ENCODE measurements at regions of chr1 and their contacts with region 1.

Region 1: GRCh38 chr1:66242646-66243547 is 291.1 kb upstream of the SGIP1 start:
- DNase-seq: peak; percentile 83
- ATAC-seq: peak; percentile 95
- H3K4me3 Mint-ChIP-seq: no peak overlapping the region
- H3K27ac Mint-ChIP-seq: no peak overlapping the region
- H3K4me1 Mint-ChIP-seq: peaks cover 27% of the 10 kb centered on the region
- H3K27me3 Mint-ChIP-seq: peaks cover 6% of the 10 kb centered on the region

Region 2: DNA sequence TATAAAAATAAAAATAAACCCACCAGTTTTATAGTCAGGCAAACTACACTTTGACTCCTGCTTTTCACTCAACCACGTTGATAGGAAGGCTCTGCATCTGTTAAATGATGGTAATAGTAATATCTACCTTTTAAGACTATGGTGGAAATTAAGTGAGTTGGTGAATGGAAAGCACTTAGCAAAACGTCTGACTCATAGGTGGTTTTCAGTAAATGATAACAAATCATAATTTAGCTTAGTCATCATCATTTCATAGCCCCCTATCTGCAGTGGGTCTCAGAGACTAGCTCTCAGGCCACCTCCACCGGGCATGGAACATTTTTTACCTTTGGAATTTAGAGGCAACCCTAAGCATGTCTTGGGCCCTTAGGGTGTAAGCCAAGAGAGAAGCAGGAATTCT is 290.2 kb before region 1 on chr1:
- CTCF ChIA-PET with region 1: interaction called, 109 read pairs
- POLR2A ChIA-PET with region 1: no interaction called
- DNase-seq: no peak
- ATAC-seq: no peak
- H3K4me3 Mint-ChIP-seq: no peak overlapping the region
- H3K27ac Mint-ChIP-seq: no peak overlapping the region
- H3K4me1 Mint-ChIP-seq: no peaks in the 10 kb centered on the region
- H3K27me3 Mint-ChIP-seq: peaks cover 4% of the 10 kb centered on the region

Region 3: DNA sequence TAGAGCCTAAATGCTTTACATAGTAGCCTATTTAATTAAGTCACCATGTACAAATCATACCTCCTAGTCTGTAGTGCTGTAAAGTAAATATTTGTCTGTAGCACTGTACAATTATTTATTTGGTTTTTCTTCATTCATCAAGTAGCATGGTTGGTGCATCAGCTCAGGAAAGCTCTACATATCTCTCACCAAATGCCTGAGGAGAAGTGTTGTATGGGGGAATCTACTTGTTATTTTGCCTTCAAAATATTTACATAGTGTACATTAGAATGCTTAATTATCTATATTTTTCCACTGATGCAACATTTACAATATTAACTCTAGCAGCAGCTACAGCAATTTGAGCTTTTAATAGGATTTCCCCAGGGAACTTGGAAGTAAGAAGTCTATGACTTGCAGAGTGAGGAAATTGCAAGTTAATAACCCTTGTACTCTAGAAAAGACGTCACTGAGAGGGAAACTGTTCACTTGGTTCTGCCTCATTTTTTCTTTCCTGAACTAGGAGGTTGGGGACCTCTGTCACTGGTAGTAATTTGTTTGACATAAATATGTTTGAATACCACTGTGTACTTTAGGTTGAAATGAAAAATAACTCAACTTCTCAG is 242.8 kb before region 1 on chr1:
- CTCF ChIA-PET with region 1: interaction called, 20 read pairs
- POLR2A ChIA-PET with region 1: no interaction called
- DNase-seq: no peak
- ATAC-seq: no peak
- H3K4me3 Mint-ChIP-seq: no peak overlapping the region
- H3K27ac Mint-ChIP-seq: no peak overlapping the region
- H3K4me1 Mint-ChIP-seq: no peaks in the 10 kb centered on the region
- H3K27me3 Mint-ChIP-seq: peaks cover 6% of the 10 kb centered on the region

Region 4: GRCh38 chr1:66217021-66217420 is 25.9 kb before region 1 on chr1:
- CTCF ChIA-PET with region 1: interaction called, 15 read pairs
- POLR2A ChIA-PET with region 1: no interaction called
- DNase-seq: no peak
- ATAC-seq: no peak
- H3K4me3 Mint-ChIP-seq: no peak overlapping the region
- H3K27ac Mint-ChIP-seq: no peak overlapping the region
- H3K4me1 Mint-ChIP-seq: peaks cover 6% of the 10 kb centered on the region
- H3K27me3 Mint-ChIP-seq: no peaks in the 10 kb centered on the region

Region 5: DNA sequence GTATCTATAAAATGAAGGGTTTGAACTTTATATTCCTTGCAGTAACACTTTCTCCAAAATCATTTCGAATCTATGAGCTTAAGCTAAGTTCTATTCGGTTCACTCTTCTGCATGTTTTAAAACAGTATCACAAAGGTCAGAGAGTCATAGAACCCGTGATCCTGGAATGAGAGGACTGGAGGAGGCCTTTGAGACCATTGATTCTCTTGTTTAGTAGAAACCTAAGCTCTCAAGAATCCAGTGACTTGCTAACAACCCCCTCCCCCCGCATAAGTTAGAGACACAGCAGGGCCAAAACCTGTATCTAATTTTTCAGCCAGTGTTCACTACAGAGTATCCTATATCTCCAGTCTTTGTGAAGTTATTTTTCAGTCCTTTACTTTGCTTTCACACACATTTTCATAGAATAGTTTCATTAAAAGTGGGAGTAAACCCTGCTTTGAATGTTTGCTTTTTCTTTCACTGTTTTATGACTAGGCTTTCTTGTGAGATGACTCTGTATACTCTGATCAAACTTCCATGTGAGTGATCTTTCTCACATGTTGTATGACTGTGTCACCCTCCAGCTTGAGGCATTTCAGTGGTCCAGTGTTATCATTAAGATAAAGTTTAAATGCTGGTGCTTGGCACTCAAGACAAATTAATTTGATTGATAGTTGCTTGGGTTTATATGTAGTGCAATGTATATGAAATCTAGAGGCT is 15.7 kb after region 1 on chr1:
- CTCF ChIA-PET with region 1: interaction called, 49 read pairs
- POLR2A ChIA-PET with region 1: no interaction called
- DNase-seq: no peak
- ATAC-seq: no peak
- H3K4me3 Mint-ChIP-seq: no peak overlapping the region
- H3K27ac Mint-ChIP-seq: no peak overlapping the region
- H3K4me1 Mint-ChIP-seq: peaks cover 52% of the 10 kb centered on the region
- H3K27me3 Mint-ChIP-seq: no peaks in the 10 kb centered on the region

Region 6: GRCh38 chr1:66383168-66383567 is 140.3 kb after region 1 on chr1:
- CTCF ChIA-PET with region 1: no interaction called
- POLR2A ChIA-PET with region 1: no interaction called
- DNase-seq: no peak
- ATAC-seq: no peak
- H3K4me3 Mint-ChIP-seq: no peak overlapping the region
- H3K27ac Mint-ChIP-seq: no peak overlapping the region
- H3K4me1 Mint-ChIP-seq: peaks cover 4% of the 10 kb centered on the region
- H3K27me3 Mint-ChIP-seq: no peaks in the 10 kb centered on the region

Region 7: GRCh38 chr1:66446261-66447001 is 203.5 kb after region 1 on chr1:
- CTCF ChIA-PET with region 1: interaction called, 703 read pairs
- POLR2A ChIA-PET with region 1: interaction called, 11 read pairs
- DNase-seq: peak; percentile 67
- ATAC-seq: peak; percentile 66
- H3K4me3 Mint-ChIP-seq: peak overlapping the region; percentile 76
- H3K27ac Mint-ChIP-seq: peak overlapping the region; percentile 96
- H3K4me1 Mint-ChIP-seq: peaks cover 25% of the 10 kb centered on the region
- H3K27me3 Mint-ChIP-seq: peaks cover 11% of the 10 kb centered on the region

Measured in activated CD8-positive, alpha-beta T cell treated with anti-CD3 and anti-CD28 coated beads, Interleukin-2, amount 10 ng/mL, durations not matched to agents 7 days and 5 days (primary cell).